CD4-positive, alpha-beta T cell (primary cell): ENCODE measurements at regions of chr6 and their contacts with region 1.

Region 1: GRCh38 chr6:131368198-131368911 is 204.7 kb upstream of the ARG1 start:
- DNase-seq: no peak
- ATAC-seq: no peak
- H3K4me3 ChIP-seq: no peak overlapping the region
- H3K4me3 Mint-ChIP-seq: no peak overlapping the region
- H3K27ac ChIP-seq: no peak overlapping the region
- H3K27ac Mint-ChIP-seq: peak overlapping the region; percentile 64
- H3K4me1 ChIP-seq: no peaks in the 10 kb centered on the region
- H3K4me1 Mint-ChIP-seq: peaks cover 36% of the 10 kb centered on the region
- H3K27me3 ChIP-seq: no peaks in the 10 kb centered on the region
- H3K27me3 Mint-ChIP-seq: no peaks in the 10 kb centered on the region
- CTCF ChIP-seq: no peak

Region 2: DNA sequence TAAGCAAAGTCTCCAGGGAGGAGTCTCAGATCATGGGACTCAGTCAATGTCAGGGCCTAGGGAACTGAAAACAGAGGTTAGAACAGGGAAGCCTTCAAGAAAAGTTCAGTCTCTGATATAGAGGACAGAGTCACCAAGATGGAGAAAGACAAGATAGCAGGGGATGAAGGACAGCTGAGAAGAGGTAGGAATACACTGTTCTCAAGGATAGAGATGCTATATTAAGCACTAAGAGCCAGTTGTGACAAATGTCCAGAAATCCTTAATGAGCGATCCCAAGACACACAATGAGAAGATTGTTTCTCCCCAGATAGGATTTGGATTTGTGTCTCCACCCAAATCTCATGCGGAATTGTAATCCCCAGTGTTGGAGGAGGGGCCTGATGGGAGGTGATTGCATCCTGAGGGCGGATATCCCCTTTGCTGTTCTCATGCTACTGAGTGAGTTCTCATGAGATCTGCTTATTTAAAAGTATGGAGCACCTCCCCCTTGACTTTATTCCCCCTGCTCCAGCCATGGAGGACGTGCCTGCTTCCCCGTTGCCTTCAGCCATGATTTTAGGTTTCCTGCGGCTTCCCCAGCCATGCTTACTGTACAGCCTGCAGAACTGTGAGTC is 64.9 kb before region 1 on chr6:
- CTCF ChIA-PET with region 1: no interaction called
- POLR2A ChIA-PET with region 1: no interaction called
- intact Hi-C with region 1: loop called in 1 of 2 experiments (anchors 5 kb)
- DNase-seq: no peak
- ATAC-seq: no peak
- H3K4me3 ChIP-seq: no peak overlapping the region
- H3K4me3 Mint-ChIP-seq: no peak overlapping the region
- H3K27ac ChIP-seq: no peak overlapping the region
- H3K27ac Mint-ChIP-seq: peak overlapping the region; percentile 16
- H3K4me1 ChIP-seq: peaks cover 4% of the 10 kb centered on the region
- H3K4me1 Mint-ChIP-seq: peaks cover 16% of the 10 kb centered on the region
- H3K27me3 ChIP-seq: no peaks in the 10 kb centered on the region
- H3K27me3 Mint-ChIP-seq: no peaks in the 10 kb centered on the region
- CTCF ChIP-seq: no peak

Region 3: DNA sequence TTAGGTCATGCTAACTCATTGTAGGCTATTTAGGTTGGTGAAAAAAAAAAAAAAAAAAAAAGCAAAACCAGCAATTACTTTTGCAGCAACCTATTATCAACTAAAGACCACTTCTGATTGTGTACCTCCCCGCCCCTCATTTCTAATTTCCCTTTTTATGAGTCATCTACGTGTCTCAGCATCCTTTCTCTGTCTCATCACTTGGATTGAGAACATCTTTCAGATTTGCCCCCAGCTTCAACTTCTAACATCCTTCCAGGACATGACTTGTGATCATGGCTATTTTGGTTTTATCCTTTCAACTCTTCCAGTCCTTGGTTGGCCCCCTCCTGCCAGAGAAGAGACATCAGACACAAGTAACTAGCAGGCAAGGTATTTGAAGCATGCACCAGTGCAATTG is 739.5 kb after region 1 on chr6:
- CTCF ChIA-PET with region 1: no interaction called
- POLR2A ChIA-PET with region 1: no interaction called
- intact Hi-C with region 1: no loop called
- DNase-seq: no peak
- ATAC-seq: no peak
- H3K4me3 ChIP-seq: no peak overlapping the region
- H3K4me3 Mint-ChIP-seq: no peak overlapping the region
- H3K27ac ChIP-seq: no peak overlapping the region
- H3K27ac Mint-ChIP-seq: no peak overlapping the region
- H3K4me1 ChIP-seq: no peaks in the 10 kb centered on the region
- H3K4me1 Mint-ChIP-seq: no peaks in the 10 kb centered on the region
- H3K27me3 ChIP-seq: no peaks in the 10 kb centered on the region
- H3K27me3 Mint-ChIP-seq: no peaks in the 10 kb centered on the region
- CTCF ChIP-seq: no peak